ENCODE measurements at regions of chr20 and their contacts with region 1.

Region 1: DNA sequence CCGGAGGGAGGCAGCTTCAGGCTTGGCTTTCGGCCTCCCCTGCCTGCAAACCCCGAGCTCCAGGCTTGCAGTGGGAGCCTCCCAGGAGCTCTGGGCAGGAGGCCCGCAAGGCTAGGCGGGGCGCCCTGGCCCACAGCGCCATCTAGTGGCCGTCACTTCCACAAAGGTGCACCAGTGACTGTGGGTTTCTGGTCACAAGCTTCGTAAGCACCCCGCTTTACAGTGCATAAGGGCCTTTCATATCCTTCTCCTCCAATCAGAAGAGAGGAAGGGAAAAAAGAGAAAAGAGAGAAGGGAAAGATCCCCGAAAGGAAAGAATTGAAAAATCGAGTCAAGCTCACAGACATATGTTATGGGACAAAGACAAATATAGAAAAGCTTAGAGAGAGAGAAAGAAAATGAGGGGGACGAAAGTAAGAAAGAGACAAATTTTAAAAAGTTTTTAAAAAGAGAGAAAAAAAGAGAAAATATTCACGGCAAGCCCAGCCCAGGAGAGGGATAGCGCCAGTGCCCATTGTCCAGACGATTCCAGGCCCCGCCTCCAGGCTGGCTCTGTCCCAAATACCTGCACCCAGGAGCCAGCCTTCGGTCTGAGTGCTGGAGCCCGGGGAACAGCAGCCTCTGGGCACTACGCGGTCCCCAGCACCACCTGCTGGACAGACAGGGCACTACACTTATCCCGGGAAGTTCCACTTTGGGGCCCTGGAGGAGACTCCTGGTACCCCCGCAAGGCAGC is 207.1 kb downstream of the PREX1 start:
- DNase-seq: peak; percentile 87 to 90
- ATAC-seq: peak; percentile 86 to 98 (median 94)
- H3K4me3 ChIP-seq: peak overlapping the region in 8 of 10 donors; percentile 16 to 41 (median 30)
- H3K27ac ChIP-seq: no peak overlapping the region
- H3K4me1 ChIP-seq: peaks cover 12 to 27% (median 20%) of the 10 kb centered on the region in 9 donors
- H3K27me3 ChIP-seq: no peaks in the 10 kb centered on the region
- CTCF ChIP-seq: peak; percentile 75 to 95 (median 77)

Region 2: DNA sequence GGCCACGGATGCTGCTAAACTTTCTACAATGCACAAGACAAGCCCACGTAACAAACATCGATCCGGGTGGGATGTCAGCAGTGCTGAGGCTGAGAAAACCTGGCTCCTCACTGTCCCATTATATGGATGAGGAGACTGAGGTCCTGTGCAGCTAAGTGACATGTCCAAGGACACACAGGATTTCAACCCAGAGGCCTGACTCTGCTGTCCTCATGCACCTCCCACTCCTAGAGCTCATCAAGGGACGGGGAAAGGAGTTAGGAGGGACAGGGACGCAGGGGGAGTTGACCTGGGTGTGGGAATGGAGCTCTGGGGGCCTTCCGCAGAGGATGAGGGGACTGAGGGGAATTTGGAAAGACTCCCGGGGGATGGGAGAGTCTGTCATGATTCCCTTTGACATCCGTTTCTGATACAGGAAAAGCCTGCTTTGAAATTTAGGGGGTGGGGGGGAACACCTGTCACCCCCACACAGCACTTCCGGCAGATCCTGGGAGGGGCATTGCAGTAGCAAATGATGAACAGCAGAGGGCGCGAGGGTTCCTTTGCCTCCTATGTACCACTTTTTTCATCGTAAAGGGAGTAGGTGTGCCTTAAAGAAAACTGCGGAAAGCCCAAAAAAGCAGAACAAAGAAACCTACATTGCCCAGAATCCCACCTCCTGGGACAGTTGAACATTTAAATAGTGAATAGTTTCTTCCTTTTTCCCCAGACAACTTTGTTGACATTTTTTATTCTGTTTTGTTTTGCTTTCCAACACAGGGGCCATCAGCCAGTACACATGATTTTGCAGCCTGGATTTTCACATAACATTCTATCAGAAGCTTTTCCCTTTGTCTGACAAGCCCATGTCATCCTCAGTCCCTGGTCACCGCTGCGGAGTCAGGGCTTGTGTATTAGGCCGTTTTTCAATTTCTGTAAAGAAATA is 1862.7 kb before region 1 on chr20:
- intact Hi-C with region 1: loop called in 1 of 10 experiments (anchors 10 kb)
- DNase-seq: peak; percentile 35 to 37
- ATAC-seq: peak in 4 of 8 donors; percentile 23 to 56 (median 48)
- H3K4me3 ChIP-seq: no peak overlapping the region
- H3K27ac ChIP-seq: no peak overlapping the region
- H3K4me1 ChIP-seq: peaks cover 0 to 4% (median 0%) of the 10 kb centered on the region in 9 donors
- H3K27me3 ChIP-seq: peaks cover 0 to 13% (median 0%) of the 10 kb centered on the region in 7 donors
- CTCF ChIP-seq: peak; percentile 80 to 95 (median 92)

Region 3: GRCh38 chr20:47591231-47591630 is 1029.5 kb before region 1 on chr20:
- intact Hi-C with region 1: loop called in 1 of 10 experiments (anchors 5 kb)
- DNase-seq: no peak
- ATAC-seq: no peak
- H3K4me3 ChIP-seq: no peak overlapping the region
- H3K27ac ChIP-seq: no peak overlapping the region
- H3K4me1 ChIP-seq: peaks cover 0 to 24% (median 6%) of the 10 kb centered on the region in 9 donors
- H3K27me3 ChIP-seq: no peaks in the 10 kb centered on the region
- CTCF ChIP-seq: no peak

Region 4: GRCh38 chr20:47663333-47664067 is 957.2 kb before region 1 on chr20:
- intact Hi-C with region 1: loop called (anchors 1 to 5 kb)
- DNase-seq: peak; percentile 76 to 79
- ATAC-seq: peak; percentile 75 to 92 (median 84)
- H3K4me3 ChIP-seq: no peak overlapping the region
- H3K27ac ChIP-seq: no peak overlapping the region
- H3K4me1 ChIP-seq: peaks cover 3 to 24% (median 10%) of the 10 kb centered on the region in 9 donors
- H3K27me3 ChIP-seq: no peaks in the 10 kb centered on the region
- CTCF ChIP-seq: peak; percentile 96 to 99 (median 97)

Region 5: DNA sequence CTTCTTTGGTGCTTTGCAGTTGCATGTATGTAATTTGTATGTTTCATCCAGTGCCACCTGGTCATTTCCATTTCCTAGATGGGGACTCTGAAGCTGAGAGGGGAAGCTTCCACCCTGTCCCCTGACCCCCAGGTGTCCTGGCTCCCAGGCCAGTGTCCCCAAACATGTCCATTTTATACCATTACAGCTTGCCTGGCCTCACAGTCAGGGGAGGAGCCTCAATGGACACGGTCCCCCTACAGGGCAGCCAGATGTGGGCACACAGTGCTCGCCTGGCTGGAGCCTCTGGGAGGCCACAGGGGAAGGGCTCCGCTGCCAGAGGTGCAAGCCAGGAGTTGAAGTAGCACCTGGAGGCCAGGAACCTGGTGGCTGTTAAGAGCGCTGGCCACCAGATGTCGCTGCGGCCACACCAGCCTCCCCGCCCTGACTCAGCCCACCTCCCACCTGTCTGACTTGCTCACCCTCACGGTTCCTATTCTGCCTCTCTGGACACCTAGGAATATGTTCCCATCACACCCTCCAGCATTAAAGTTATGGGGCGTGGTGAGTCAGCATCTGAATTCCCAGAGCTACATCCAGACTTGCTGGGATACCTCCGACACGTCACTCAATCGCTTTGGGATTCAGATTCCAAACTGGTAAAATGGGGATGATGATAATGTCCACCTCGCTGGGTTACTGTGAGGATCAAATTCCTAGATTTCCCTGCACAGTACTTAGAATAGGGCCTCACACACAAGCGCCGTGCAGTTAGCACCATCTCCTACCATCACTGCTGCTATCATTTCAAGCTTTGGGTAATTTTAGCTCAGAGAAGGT is 942.8 kb before region 1 on chr20:
- intact Hi-C with region 1: loop called in 9 of 10 experiments (anchors 1 to 5 kb)
- DNase-seq: peak; percentile 28 to 52
- ATAC-seq: peak in 3 of 8 donors; percentile 30 to 53 (median 40)
- H3K4me3 ChIP-seq: no peak overlapping the region
- H3K27ac ChIP-seq: no peak overlapping the region
- H3K4me1 ChIP-seq: peaks cover 9 to 32% (median 17%) of the 10 kb centered on the region in 9 donors
- H3K27me3 ChIP-seq: no peaks in the 10 kb centered on the region
- CTCF ChIP-seq: peak; percentile 42 to 80 (median 78)

Region 6: GRCh38 chr20:47725248-47725973 is 895.3 kb before region 1 on chr20:
- intact Hi-C with region 1: loop called in 6 of 10 experiments (anchors 2 to 5 kb)
- DNase-seq: peak; percentile 41 to 76
- ATAC-seq: peak; percentile 29 to 80 (median 69)
- H3K4me3 ChIP-seq: no peak overlapping the region
- H3K27ac ChIP-seq: no peak overlapping the region
- H3K4me1 ChIP-seq: peaks cover 0 to 40% (median 5%) of the 10 kb centered on the region in 9 donors
- H3K27me3 ChIP-seq: no peaks in the 10 kb centered on the region
- CTCF ChIP-seq: peak; percentile 77 to 92 (median 87)

Region 7: DNA sequence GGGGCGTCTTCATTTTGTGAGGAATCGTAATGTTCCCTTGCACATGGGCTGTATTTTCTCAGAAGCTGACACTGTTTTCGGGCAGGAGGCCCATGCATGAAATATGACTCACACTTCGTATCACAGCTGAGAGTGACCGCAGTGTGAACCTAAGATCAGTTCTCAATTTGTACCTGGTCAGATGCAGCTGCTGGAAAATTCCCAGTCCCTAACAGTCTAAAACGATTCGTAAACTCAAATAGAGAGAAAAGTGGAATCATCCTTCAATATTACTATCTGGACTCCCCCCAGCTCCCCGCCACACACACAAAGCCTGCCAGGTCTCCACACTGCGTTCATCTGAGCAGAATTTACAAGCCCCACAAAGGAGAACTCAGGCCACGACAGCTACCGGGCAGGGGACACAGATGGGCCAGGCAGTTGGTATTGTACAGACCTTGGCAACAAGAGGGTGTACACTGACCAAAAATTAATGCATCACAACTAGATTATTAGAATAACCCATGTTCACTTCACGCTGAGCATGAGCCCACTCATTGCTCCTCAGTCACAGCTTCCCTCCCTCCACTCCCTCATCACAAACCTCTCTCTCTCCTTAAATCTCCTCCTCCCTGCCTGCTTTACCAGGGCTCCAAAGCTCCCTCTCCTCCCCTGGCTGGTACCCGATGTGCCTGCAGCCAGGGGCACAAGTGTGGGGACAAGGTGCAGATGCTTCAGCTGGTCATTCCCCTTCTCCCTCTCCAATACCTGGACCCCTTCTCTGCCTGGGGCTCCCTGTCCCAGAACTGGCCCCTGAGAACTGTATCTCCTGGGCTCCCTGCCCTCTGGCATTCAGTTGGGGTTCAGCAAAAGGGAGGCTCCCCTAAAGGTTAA is 281.3 kb before region 1 on chr20:
- intact Hi-C with region 1: no loop called
- DNase-seq: no peak
- ATAC-seq: peak in 7 of 8 donors; percentile 51 to 72 (median 54)
- H3K4me3 ChIP-seq: no peak overlapping the region
- H3K27ac ChIP-seq: no peak overlapping the region
- H3K4me1 ChIP-seq: peaks cover 0 to 6% (median 0%) of the 10 kb centered on the region in 9 donors
- H3K27me3 ChIP-seq: peaks cover 0 to 19% (median 4%) of the 10 kb centered on the region in 7 donors
- CTCF ChIP-seq: no peak